ENCODE measurements at regions of chr17 and their contacts with region 1.

Region 1: DNA sequence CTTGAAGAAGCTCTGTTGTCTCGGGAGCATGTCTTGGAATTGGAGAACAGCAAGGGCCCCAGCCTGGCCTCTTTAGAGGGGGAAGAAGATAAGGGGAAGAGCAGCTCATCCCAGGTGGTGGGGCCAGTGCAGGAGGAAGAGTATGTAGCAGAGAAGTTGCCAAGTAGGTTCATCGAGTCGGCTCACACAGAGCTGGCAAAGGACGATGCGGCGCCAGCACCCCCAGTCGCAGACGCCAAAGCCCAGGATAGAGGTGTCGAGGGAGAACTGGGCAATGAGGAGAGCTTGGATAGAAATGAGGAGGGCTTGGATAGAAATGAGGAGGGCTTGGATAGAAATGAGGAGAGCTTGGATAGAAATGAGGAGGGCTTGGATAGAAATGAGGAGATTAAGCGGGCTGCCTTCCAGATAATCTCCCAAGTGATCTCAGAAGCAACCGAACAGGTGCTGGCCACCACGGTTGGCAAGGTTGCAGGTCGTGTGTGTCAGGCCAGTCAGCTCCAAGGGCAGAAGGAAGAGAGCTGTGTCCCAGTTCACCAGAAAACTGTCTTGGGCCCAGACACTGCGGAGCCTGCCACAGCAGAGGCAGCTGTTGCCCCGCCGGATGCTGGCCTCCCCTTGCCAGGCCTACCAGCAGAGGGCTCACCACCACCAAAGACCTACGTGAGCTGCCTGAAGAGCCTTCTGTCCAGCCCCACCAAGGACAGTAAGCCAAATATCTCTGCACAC is 21.2 kb downstream of the AKAP1 start:
- DNase-seq: no peak
- H3K4me3 ChIP-seq: no peak overlapping the region
- H3K27ac ChIP-seq: peak overlapping the region; percentile 76 to 87
- H3K4me1 ChIP-seq: peaks cover 0 to 31% of the 10 kb centered on the region in 2 donors
- H3K27me3 ChIP-seq: no peaks in the 10 kb centered on the region
- CTCF ChIP-seq: no peak
- POLR2A ChIP-seq: no peak

Region 2: DNA sequence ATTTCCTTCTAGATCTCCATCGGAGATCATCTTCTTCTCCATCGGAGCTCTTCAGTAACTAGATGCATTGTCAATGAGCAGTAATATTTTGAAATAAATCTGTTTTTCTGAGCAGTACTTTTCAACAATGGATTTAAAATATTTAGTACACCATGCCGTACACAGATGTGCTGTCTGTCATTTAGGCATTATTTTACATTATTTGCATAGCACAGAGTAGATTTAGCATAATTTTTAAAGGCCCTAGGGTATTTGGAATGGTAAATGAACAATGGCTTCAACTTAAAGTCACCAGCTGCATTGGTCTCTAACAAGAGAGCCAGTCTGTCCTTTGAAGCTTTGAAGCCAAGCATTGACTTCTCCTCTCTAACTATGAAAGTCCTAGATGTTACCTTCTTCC is 1048.4 kb before region 1 on chr17:
- intact Hi-C with region 1: no loop called
- DNase-seq: no peak
- H3K4me3 ChIP-seq: no peak overlapping the region
- H3K27ac ChIP-seq: no peak overlapping the region
- H3K4me1 ChIP-seq: no peaks in the 10 kb centered on the region
- H3K27me3 ChIP-seq: no peaks in the 10 kb centered on the region
- CTCF ChIP-seq: no peak
- POLR2A ChIP-seq: no peak

Region 3: DNA sequence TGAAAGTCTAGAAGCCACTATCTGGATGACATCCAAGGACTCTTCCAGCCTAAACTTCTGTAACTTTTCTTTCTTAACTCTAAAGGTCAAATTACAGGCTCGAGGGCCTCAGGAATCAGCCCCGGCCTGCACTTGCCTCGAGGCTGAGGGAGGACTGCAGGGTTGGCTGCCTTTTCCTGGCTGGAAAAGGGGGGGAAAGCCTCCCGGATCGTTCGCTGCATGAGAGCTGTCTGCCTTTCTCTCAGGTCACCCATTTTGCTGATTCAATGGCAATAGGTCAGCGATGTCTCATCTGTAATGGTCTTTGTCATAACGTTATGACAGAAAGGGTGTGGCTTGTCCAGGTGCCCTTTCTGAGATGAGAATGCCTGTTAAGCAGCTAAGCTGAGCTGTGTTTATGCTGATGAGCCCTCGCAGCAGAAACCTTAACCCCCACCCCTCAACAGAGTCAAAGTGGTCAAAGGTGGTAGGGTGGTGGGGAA is 60.5 kb after region 1 on chr17:
- intact Hi-C with region 1: loop called (anchors 2 kb)
- DNase-seq: no peak
- H3K4me3 ChIP-seq: no peak overlapping the region
- H3K27ac ChIP-seq: no peak overlapping the region
- H3K4me1 ChIP-seq: no peaks in the 10 kb centered on the region
- H3K27me3 ChIP-seq: no peaks in the 10 kb centered on the region
- CTCF ChIP-seq: no peak
- POLR2A ChIP-seq: no peak

Region 4: GRCh38 chr17:57195785-57196460 is 89.7 kb after region 1 on chr17:
- intact Hi-C with region 1: no loop called
- DNase-seq: peak in 1 of 2 donors; percentile 54
- H3K4me3 ChIP-seq: no peak overlapping the region
- H3K27ac ChIP-seq: no peak overlapping the region
- H3K4me1 ChIP-seq: no peaks in the 10 kb centered on the region
- H3K27me3 ChIP-seq: no peaks in the 10 kb centered on the region
- CTCF ChIP-seq: no peak
- POLR2A ChIP-seq: no peak

Measured in breast epithelium (tissue), 4 donors.